Naive thymus-derived CD4-positive, alpha-beta T cell (primary cell): ENCODE measurements at regions of chr9 and their contacts with region 1.

Region 1: DNA sequence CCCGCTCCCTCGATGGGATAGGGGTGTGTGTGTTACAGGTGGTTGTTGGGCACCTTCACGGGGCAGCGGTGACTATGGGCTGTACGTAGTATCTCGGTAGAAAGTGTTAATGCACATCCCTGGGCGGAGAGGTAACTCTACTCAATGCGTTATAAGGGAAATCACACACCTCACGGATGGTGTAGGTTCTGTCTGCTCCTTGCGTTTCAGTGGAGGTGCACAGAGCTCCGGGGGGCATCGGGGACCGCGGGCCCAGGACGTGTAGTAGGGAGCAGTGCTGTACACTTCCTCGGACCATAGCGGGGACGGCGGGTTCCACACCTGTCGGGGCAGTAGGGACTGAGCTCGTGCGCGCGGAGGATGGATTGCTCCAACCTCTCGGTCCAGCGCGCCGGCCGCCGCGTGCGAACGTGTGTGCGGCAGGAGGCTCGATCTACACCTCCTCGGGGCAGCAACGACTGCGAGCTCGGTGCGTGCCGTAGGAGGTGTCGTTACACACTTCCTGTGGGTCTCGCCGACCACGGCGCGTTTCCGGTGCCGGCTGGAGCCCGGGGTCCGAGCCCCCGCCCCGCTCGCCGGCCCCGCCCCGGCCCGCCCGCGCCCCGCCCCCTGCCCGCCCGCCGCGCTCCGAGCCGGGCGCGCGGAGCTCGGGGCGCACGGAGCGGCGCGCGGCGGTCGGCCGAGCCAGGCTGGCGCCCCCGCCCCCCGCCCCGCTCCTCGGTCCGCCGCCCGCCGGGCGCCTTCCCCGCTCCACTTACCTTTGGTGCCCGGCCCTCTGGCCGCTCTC is at the start of gene KIAA1958:
- DNase-seq: peak; percentile 51 to 88 (median 73)
- ATAC-seq: peak; percentile 88
- H3K4me3 ChIP-seq: peak within 1 kb of the TSS; percentile 69
- H3K4me3 Mint-ChIP-seq: peak within 1 kb of the TSS; percentile 95 to 100 (median 98)
- H3K27ac ChIP-seq: peak within 1 kb of the TSS; percentile 72
- H3K27ac Mint-ChIP-seq: peak within 1 kb of the TSS; percentile 93 to 98 (median 97)
- H3K4me1 ChIP-seq: peaks cover 4 to 6% of the 10 kb centered on the region in 2 donors
- H3K4me1 Mint-ChIP-seq: peaks cover 19 to 64% (median 49%) of the 10 kb centered on the region in 7 donors
- H3K27me3 ChIP-seq: no peaks in the 10 kb centered on the region
- H3K27me3 Mint-ChIP-seq: peaks cover 0 to 6% (median 0%) of the 10 kb centered on the region in 5 donors
- total RNA-seq, gene KIAA1958: 6.2 to 8.3 (median 7.0) TPM

Region 2: GRCh38 chr9:111533099-111533790 is 953.2 kb before region 1 on chr9:
- CTCF ChIA-PET with region 1: no interaction called
- POLR2A ChIA-PET with region 1: no interaction called
- intact Hi-C with region 1: loop called in 1 of 2 experiments (anchors 5 kb)
- DNase-seq: no peak
- ATAC-seq: no peak
- H3K4me3 ChIP-seq: no peak overlapping the region
- H3K4me3 Mint-ChIP-seq: no peak overlapping the region
- H3K27ac ChIP-seq: no peak overlapping the region
- H3K27ac Mint-ChIP-seq: no peak overlapping the region
- H3K4me1 ChIP-seq: no peaks in the 10 kb centered on the region
- H3K4me1 Mint-ChIP-seq: no peaks in the 10 kb centered on the region
- H3K27me3 ChIP-seq: no peaks in the 10 kb centered on the region
- H3K27me3 Mint-ChIP-seq: no peaks in the 10 kb centered on the region

Region 3: GRCh38 chr9:112443200-112443599 is 43.2 kb before region 1 on chr9:
- CTCF ChIA-PET with region 1: interaction called, 6 read pairs
- POLR2A ChIA-PET with region 1: interaction called, 4 read pairs
- intact Hi-C with region 1: loop called (anchors 1 to 2 kb)
- DNase-seq: peak in 6 of 9 donors; percentile 16 to 37 (median 28)
- ATAC-seq: no peak
- H3K4me3 ChIP-seq: no peak overlapping the region
- H3K4me3 Mint-ChIP-seq: no peak overlapping the region
- H3K27ac ChIP-seq: no peak overlapping the region
- H3K27ac Mint-ChIP-seq: peak overlapping the region in 1 of 9 donors; percentile 10
- H3K4me1 ChIP-seq: no peaks in the 10 kb centered on the region
- H3K4me1 Mint-ChIP-seq: peaks cover 0 to 10% (median 0%) of the 10 kb centered on the region in 7 donors
- H3K27me3 ChIP-seq: no peaks in the 10 kb centered on the region
- H3K27me3 Mint-ChIP-seq: no peaks in the 10 kb centered on the region

Region 4: GRCh38 chr9:112750111-112750767 is 263.8 kb after region 1 on chr9 and contains the start of gene SNX30:
- CTCF ChIA-PET with region 1: no interaction called
- POLR2A ChIA-PET with region 1: interaction called, 5 read pairs
- intact Hi-C with region 1: loop called (anchors 1 to 2 kb)
- DNase-seq: peak; percentile 66 to 83 (median 75)
- ATAC-seq: peak; percentile 94
- H3K4me3 ChIP-seq: peak within 1 kb of the TSS; percentile 70
- H3K4me3 Mint-ChIP-seq: peak within 1 kb of the TSS; percentile 88 to 94 (median 92)
- H3K27ac ChIP-seq: peak within 1 kb of the TSS; percentile 68
- H3K27ac Mint-ChIP-seq: peak within 1 kb of the TSS; percentile 88 to 98 (median 96)
- H3K4me1 ChIP-seq: peaks cover 46% of the 10 kb centered on the region in 2 donors
- H3K4me1 Mint-ChIP-seq: peaks cover 39 to 66% (median 60%) of the 10 kb centered on the region in 7 donors
- H3K27me3 ChIP-seq: no peaks in the 10 kb centered on the region
- H3K27me3 Mint-ChIP-seq: peaks cover 0 to 4% (median 0%) of the 10 kb centered on the region in 5 donors
- total RNA-seq, gene SNX30: 6.6 to 15.8 (median 9.2) TPM